Gastrocnemius medialis (tissue), 4 donors: ENCODE measurements at regions of chr3 and their contacts with region 1.

Region 1: DNA sequence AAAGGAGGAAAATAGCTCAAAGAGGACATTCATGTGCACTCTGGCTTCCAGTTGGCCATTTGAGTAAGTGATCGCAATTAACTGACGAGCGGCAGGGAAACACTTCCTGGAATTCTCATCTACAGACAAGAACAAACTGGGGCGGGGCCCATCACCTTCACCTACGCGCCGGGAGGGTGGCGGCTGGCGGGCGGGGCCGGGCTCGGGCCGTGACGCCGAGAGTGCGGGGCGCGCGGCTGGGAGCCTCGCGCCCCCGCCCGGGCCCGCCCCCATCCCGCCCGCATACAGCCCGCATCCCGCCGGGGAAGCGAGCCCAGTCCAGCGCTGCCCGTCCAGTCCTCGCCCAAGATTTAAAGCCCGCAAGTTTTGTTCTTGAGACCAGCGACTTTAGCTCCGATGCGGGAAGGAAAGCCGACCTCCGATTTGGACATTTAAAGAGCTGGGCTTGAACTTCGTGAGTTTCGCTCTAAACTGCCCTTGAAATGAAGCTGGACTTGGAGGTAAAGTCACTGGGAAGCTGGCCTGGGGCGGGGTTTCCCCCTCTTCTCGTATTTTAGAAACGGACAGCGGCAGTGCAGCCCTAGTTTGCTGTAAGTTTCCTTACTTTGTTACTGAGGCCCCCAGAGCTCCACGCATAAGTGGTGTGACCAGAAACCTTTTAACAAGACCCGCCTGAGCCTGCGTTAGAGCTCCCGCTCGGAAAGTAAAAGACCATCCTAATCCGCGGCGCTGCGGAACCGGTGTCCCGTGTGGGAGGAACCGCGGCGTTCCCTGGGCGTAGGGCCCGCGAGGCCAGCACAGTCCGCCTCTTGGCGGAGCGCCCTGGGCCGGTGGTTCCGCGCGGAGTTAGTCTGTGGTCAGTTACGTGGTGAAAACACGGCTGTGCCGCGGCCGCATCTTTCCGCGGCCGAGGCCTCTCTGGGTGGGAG is at the start of gene B3GNT5:
- DNase-seq: peak; percentile 68 to 79
- ATAC-seq: peak; percentile 76 to 81
- H3K4me3 ChIP-seq: peak within 1 kb of the TSS; percentile 72 to 86 (median 81)
- H3K27ac ChIP-seq: peak within 1 kb of the TSS; percentile 88 to 98 (median 91)
- H3K4me1 ChIP-seq: peaks cover 19 to 24% of the 10 kb centered on the region in 2 donors
- H3K27me3 ChIP-seq: no peaks in the 10 kb centered on the region
- CTCF ChIP-seq: no peak
- POLR2A ChIP-seq: peak; percentile 58 to 61
- total RNA-seq, gene B3GNT5: 18.2 to 41.2 (median 26.0) TPM

Region 2: GRCh38 chr3:183013856-183014255 is 239.4 kb before region 1 on chr3:
- in situ Hi-C with region 1: no loop called
- intact Hi-C with region 1: no loop called
- DNase-seq: no peak
- ATAC-seq: no peak
- H3K4me3 ChIP-seq: no peak overlapping the region
- H3K27ac ChIP-seq: no peak overlapping the region
- H3K4me1 ChIP-seq: peaks cover 0 to 6% of the 10 kb centered on the region in 2 donors
- H3K27me3 ChIP-seq: no peaks in the 10 kb centered on the region
- CTCF ChIP-seq: no peak
- POLR2A ChIP-seq: no peak

Region 3: DNA sequence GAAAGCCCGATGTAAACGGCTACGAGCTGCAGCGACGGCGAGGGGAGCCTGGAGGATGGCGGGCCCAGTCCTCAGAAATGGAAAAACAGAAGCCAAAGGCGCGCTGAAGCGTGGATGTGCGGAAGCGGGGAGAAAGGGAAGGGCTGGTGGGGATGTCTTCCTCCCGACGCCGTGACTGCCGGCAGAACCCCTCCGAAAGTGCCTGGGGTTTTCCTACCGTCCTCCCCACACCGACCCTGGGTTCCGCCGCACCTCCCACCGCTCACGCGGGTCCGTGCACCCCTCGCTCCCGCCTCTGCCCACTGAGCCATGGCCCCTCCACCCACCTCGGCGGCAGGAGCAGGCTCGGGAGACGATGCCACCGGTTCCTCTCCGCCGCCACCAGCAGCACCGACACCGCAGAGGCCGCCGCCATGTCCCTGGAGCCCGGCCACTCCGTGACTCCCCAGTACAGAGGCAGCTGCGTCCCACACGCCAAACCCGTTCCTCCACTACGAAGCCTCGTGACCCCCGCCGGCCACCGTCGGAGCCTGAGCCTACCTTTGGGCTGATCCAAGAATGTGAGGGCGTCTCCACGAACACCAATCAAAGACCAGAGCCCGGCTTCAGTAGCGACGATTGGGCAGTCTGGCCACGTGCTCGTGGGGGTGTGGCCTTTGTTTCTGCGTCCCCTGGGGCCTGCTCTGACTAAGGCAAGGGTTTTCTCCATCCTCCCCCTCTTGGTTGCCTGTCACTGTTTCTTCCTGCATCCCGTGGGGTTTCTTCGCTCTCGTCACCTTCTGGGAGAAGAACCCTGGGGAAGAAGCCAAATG is 154.0 kb before region 1 on chr3 and contains the start of gene MCCC1:
- in situ Hi-C with region 1: no loop called
- intact Hi-C with region 1: loop called (anchors 2 kb)
- DNase-seq: peak; percentile 98 to 99
- ATAC-seq: peak; percentile 99
- H3K4me3 ChIP-seq: peak within 1 kb of the TSS; percentile 76 to 95 (median 82)
- H3K27ac ChIP-seq: peak within 1 kb of the TSS; percentile 86 to 94 (median 92)
- H3K4me1 ChIP-seq: peaks cover 5 to 15% of the 10 kb centered on the region in 2 donors
- H3K27me3 ChIP-seq: no peaks in the 10 kb centered on the region
- CTCF ChIP-seq: peak in 1 of 5 experiments; percentile 7
- POLR2A ChIP-seq: peak; percentile 86 to 88
- total RNA-seq, gene MCCC1: 11.5 to 24.5 (median 20.6) TPM

Region 4: DNA sequence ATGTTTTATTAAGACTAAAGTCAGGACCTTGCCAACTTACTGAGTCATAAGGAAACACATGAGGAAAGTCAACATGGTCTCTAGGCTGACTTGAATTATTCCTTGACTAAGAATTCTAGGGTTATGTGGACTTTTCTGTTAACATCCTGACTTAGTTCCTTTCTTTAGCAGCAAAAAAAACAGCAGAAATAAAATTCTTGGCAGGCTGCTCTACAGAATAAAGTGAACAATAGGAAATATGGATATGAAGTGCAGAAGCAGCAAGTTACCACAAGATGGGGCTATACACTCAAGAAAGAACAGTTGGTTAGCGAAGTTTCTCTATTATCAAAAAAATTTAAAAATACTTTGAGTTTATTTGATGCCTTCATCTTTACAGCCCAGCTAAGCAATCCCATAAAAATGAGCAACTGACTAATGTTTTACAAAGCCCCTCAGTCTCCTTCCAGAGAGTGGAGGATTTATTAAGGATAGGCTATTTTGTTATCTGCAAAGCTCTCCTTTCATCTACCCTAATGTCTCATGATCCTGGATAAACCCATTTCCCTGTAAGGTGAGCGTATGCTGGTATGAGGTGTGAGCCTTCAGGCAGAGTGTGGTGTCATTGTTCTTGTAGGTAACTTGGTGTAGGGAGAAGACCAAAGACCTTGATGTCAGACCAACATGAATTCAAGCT is 130.8 kb before region 1 on chr3:
- in situ Hi-C with region 1: loop called in 1 of 4 experiments (anchors 10 kb)
- intact Hi-C with region 1: loop called (anchors 2 kb)
- DNase-seq: no peak
- ATAC-seq: peak; percentile 70 to 72
- H3K4me3 ChIP-seq: no peak overlapping the region
- H3K27ac ChIP-seq: no peak overlapping the region
- H3K4me1 ChIP-seq: peaks cover 0 to 2% of the 10 kb centered on the region in 2 donors
- H3K27me3 ChIP-seq: peaks cover 0 to 4% (median 0%) of the 10 kb centered on the region in 3 donors
- CTCF ChIP-seq: peak; percentile 77 to 85 (median 82)
- POLR2A ChIP-seq: no peak

Region 5: DNA sequence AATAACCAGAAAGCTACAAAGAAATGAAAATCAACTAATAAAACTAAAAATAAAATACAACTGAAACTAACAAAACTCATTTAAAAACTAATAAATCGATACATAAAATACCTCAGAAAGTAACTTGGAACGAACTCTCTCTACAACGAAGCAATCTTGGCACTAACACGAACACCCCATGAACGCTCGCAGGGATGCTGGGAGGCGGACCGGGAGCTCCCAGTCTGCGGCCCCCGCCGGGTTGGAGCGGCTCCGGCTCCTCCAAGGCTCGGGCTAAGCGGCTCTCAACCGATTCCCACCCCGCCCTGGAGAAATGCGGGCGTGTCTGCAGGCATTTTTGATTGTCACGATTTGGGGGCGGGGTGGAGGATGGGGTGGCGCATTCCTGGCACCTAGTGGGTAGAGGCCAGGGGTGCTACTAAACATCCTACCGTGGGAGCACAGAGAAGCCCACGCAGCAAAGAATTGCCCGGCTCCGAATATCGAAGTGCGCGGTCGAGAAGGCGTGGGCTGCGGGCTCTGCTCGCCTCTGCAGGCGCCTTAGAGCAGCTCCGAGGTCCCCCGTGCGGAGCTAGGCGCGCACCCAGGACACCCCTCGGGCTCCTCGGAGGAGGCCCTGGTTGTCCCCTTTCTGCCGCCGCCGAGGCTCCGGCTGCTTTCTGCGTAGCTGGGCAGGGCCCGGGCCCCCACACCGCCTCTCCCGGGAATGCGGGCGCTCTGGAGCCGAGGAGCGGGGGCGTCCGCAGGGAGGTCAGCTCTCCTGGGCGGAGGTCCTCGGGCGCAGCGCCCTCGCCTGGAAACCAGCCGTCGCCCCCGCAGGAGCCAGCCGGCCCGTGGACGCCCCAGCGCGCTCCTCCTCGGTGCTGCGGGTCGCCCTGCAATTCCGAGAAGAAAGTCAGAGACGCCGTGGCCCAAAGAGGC is 74.3 kb before region 1 on chr3:
- in situ Hi-C with region 1: loop called in 1 of 4 experiments (anchors 5 kb)
- intact Hi-C with region 1: loop called (anchors 2 kb)
- DNase-seq: no peak
- ATAC-seq: peak; percentile 27 to 43
- H3K4me3 ChIP-seq: peak overlapping the region; percentile 51 to 79 (median 60)
- H3K27ac ChIP-seq: no peak overlapping the region
- H3K4me1 ChIP-seq: peaks cover 6 to 9% of the 10 kb centered on the region in 2 donors
- H3K27me3 ChIP-seq: peaks cover 22 to 50% (median 32%) of the 10 kb centered on the region in 3 donors
- CTCF ChIP-seq: no peak
- POLR2A ChIP-seq: no peak

Region 6: GRCh38 chr3:183188895-183189462 is 64.3 kb before region 1 on chr3:
- in situ Hi-C with region 1: loop called in 1 of 4 experiments (anchors 5 kb)
- intact Hi-C with region 1: loop called (anchors 2 kb)
- DNase-seq: no peak
- ATAC-seq: peak in 1 of 2 donors; percentile 26
- H3K4me3 ChIP-seq: no peak overlapping the region
- H3K27ac ChIP-seq: no peak overlapping the region
- H3K4me1 ChIP-seq: no peaks in the 10 kb centered on the region
- H3K27me3 ChIP-seq: no peaks in the 10 kb centered on the region
- CTCF ChIP-seq: no peak
- POLR2A ChIP-seq: no peak

Region 7: GRCh38 chr3:183306798-183307671 is 53.8 kb after region 1 on chr3:
- in situ Hi-C with region 1: loop called in 1 of 4 experiments (anchors 10 kb)
- intact Hi-C with region 1: loop called (anchors 5 kb)
- DNase-seq: peak; percentile 71 to 90
- ATAC-seq: peak; percentile 76
- H3K4me3 ChIP-seq: peak overlapping the region in 1 of 4 donors; percentile 21
- H3K27ac ChIP-seq: peak overlapping the region; percentile 89 to 99 (median 93)
- H3K4me1 ChIP-seq: peaks cover 49 to 67% of the 10 kb centered on the region in 2 donors
- H3K27me3 ChIP-seq: no peaks in the 10 kb centered on the region
- CTCF ChIP-seq: no peak
- POLR2A ChIP-seq: peak; percentile 9 to 53